HepG2 (cell line): ENCODE measurements at regions of chr4 and their contacts with region 1.

Region 1: GRCh38 chr4:40924096-40924792 is 174.5 kb downstream of the NSUN7 start:
- DNase-seq: peak; percentile 28
- ATAC-seq: peak; percentile 85
- H3K4me3 ChIP-seq: no peak overlapping the region
- H3K27ac ChIP-seq: no peak overlapping the region
- H3K4me1 ChIP-seq: peaks cover 7% of the 10 kb centered on the region; the same call in 1 of the 2 replicates
- H3K27me3 ChIP-seq: no peaks in the 10 kb centered on the region
- CTCF ChIP-seq: peak; percentile 66
- EP300 ChIP-seq: no peak
- POLR2A ChIP-seq: no peak
- RAD21 ChIP-seq: no peak

Region 2: DNA sequence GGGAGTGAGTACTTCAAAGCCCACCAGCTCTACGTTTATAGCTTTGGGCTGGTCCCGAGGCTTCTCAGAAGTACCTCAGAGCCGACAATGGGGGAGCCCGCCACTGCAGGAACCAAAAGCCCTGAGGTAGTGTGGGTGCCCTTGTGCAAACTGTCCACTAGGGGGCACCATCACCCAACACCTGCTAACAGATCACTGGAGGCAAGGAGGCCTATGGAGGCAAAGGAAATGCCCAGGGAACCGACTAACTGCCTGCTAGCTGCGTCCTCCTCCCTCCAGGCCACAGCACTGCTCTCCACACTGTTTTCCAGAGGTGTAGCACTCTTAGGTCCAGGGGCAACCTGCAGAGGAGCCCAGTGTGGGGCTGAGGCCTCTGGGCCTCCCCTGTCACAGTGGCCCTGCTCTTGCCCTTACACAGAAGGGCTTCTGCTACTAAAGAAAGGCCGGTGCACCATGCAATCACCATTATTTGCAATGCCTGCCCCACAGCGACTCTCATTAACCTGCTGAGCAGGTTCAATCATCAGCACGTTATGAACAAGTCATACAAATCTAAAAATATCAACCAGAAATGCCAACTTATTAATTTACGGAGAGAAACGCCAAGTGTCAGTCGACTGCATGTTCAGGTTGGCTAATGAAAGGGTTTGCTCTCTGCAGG is 15.4 kb before region 1 on chr4:
- CTCF ChIA-PET with region 1: interaction called, 3 read pairs
- POLR2A ChIA-PET with region 1: no interaction called
- in situ Hi-C with region 1: no loop called
- intact Hi-C with region 1: loop called (anchors 1 kb)
- DNase-seq: peak; percentile 59
- ATAC-seq: peak; percentile 98
- H3K4me3 ChIP-seq: no peak overlapping the region
- H3K27ac ChIP-seq: no peak overlapping the region
- H3K4me1 ChIP-seq: no peaks in the 10 kb centered on the region
- H3K27me3 ChIP-seq: no peaks in the 10 kb centered on the region
- CTCF ChIP-seq: peak; percentile 81
- EP300 ChIP-seq: no peak
- POLR2A ChIP-seq: no peak
- RAD21 ChIP-seq: peak; percentile 66

Region 3: GRCh38 chr4:41050866-41051775 is 126.9 kb after region 1 on chr4:
- CTCF ChIA-PET with region 1: no interaction called
- POLR2A ChIA-PET with region 1: no interaction called
- in situ Hi-C with region 1: no loop called
- intact Hi-C with region 1: no loop called
- DNase-seq: no peak
- ATAC-seq: no peak
- H3K4me3 ChIP-seq: no peak overlapping the region
- H3K27ac ChIP-seq: no peak overlapping the region
- H3K4me1 ChIP-seq: no peaks in the 10 kb centered on the region
- H3K27me3 ChIP-seq: no peaks in the 10 kb centered on the region
- CTCF ChIP-seq: no peak
- EP300 ChIP-seq: no peak
- POLR2A ChIP-seq: no peak
- RAD21 ChIP-seq: no peak

Region 4: GRCh38 chr4:41232406-41232805 is 308.2 kb after region 1 on chr4:
- CTCF ChIA-PET with region 1: no interaction called
- POLR2A ChIA-PET with region 1: no interaction called
- in situ Hi-C with region 1: no loop called
- intact Hi-C with region 1: loop called (anchors 5 kb)
- DNase-seq: no peak
- ATAC-seq: no peak; the same call in 2 of the 3 replicates
- H3K4me3 ChIP-seq: no peak overlapping the region
- H3K27ac ChIP-seq: no peak overlapping the region
- H3K4me1 ChIP-seq: no peaks in the 10 kb centered on the region
- H3K27me3 ChIP-seq: no peaks in the 10 kb centered on the region
- CTCF ChIP-seq: 0 out of 2 replicates have a peak, but pooled peaks have one; percentile 29
- EP300 ChIP-seq: no peak
- POLR2A ChIP-seq: no peak
- RAD21 ChIP-seq: no peak